ENCODE measurements at regions of chr11 and their contacts with region 1.

Region 1: DNA sequence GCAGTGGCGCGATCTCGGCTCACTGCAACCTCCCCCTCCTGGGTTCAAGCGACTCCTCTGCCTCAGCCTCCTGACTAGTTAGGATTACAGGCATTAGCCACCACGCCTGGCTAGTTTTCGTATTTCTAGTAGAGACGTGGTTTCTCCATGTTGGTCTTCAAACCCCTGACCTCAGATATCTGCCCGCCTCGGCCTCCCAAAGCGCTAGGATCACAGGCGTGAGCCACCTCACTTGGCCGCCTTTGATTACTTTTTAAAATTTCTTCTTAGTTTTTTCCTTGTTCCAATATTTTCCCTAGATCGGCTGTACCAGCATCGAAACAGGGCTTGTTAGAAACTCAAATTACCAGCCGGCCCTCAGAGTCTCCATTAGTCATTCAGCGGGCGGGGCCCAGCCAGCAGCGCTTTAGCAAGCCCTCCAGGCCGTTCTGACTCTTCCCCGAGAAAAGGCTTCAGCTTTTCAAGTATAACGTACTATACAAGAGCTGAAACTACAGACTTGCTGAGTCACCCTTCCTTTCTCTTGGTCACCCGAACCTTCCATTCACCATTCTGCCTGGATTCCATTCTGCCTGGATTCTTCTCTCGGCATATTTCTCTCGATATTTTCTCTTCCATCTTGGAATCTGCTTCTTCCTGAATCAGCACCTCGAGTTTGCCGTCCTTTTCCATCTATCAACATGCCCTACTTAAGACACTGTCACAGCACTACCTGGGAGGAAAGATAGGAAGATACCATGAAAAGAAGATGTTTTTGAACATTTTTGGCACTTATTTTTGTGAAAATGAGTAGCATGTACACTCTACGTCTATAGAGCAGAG is 6.7 kb upstream of the CAPRIN1 start:
- DNase-seq: peak; percentile 61
- H3K4me3 Mint-ChIP-seq: peak overlapping the region; percentile 66
- H3K27ac Mint-ChIP-seq: peak overlapping the region; percentile 77
- H3K4me1 Mint-ChIP-seq: peaks cover 14% of the 10 kb centered on the region
- H3K27me3 Mint-ChIP-seq: no peaks in the 10 kb centered on the region
- CTCF ChIP-seq: no peak

Region 2: GRCh38 chr11:34111722-34112270 is 66.9 kb after region 1 on chr11:
- CTCF ChIA-PET with region 1: no interaction called
- intact Hi-C with region 1: no loop called
- DNase-seq: no peak
- H3K4me3 Mint-ChIP-seq: no peak overlapping the region
- H3K27ac Mint-ChIP-seq: no peak overlapping the region
- H3K4me1 Mint-ChIP-seq: peaks cover 9% of the 10 kb centered on the region
- H3K27me3 Mint-ChIP-seq: no peaks in the 10 kb centered on the region
- CTCF ChIP-seq: no peak

Region 3: DNA sequence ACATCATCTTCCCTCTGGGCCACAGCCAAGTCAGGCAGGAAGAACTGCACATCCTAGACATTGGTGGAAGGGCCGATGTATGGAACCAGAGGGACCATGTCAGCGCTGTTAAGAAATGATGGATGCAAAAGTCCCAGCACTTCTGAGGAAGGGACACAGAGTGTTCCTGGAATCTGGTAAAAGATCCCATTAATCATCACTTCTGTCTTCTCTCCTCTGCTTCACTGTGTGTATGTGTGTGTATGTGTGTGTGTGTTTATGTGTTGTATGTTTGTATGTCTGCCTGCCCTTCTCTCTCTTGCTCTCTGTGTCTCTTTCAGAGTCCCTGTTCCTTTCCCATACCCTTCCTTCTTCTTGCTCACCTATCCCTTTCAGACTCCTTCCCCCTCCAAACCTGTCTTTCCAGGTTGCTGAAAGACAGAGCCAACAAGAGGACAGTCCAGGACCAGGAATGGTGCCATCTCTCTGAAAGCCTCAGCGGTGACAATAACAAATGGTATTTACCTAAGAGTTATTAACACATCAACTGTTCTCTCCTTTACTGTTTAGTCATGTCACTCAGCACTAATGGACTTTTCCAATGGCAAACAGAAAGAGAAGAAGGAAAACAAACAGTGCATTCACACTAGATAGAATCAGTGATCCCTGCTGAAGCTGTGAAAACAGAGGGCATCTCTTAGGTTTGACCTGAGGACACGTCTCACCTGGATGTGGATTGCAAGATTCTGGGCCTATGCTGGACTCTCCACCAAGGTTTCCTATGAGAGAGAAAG is 623.1 kb after region 1 on chr11:
- CTCF ChIA-PET with region 1: interaction called, 12 read pairs
- intact Hi-C with region 1: no loop called
- DNase-seq: no peak
- H3K4me3 Mint-ChIP-seq: no peak overlapping the region
- H3K27ac Mint-ChIP-seq: peak overlapping the region; percentile 32
- H3K4me1 Mint-ChIP-seq: peaks cover 37% of the 10 kb centered on the region
- H3K27me3 Mint-ChIP-seq: no peaks in the 10 kb centered on the region
- CTCF ChIP-seq: no peak